CD8-positive, alpha-beta T cell (primary cell): ENCODE measurements at regions of chr15 and their contacts with region 1.

Region 1: DNA sequence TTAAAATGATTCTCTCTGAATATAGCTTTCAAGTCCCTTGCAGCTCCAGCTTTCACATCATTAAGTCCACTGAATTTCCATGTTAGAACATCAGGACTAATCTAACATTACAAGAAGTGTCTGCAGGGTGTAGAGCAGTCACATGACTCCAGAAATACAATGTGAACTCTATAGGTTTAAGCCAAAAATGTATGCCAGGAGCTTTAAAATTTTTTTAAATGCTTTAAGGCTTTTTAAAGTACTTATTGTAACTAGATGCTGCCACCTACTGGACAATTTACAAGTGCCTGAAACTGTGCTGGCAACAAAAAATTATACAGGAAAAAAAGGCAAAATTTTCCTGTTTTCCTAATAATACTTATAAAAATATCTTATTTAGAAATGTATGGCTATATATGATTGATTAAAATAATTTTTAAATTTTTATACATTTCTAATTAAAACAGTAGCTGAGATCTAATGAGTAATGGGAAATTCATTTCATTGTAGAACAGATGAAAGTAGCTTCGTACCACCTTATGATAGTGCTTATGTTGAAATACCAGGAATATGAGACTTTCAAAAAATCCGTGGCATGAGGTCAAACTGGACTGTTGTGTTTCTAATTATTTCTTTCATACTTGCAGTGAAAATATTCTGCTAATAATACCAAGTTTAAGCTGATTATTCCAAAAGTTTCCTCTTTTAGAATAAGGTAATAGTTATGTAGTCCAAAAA is 25.7 kb downstream of the FSIP1 start:
- DNase-seq: peak in 3 of 9 experiments; percentile 33 to 76 (median 67)
- ATAC-seq: peak; percentile 38
- H3K4me3 ChIP-seq: no peak overlapping the region
- H3K4me3 Mint-ChIP-seq: no peak overlapping the region
- H3K27ac ChIP-seq: no peak overlapping the region
- H3K27ac Mint-ChIP-seq: no peak overlapping the region
- H3K4me1 ChIP-seq: no peaks in the 10 kb centered on the region
- H3K4me1 Mint-ChIP-seq: no peaks in the 10 kb centered on the region
- H3K27me3 ChIP-seq: no peaks in the 10 kb centered on the region
- H3K27me3 Mint-ChIP-seq: no peaks in the 10 kb centered on the region
- CTCF ChIP-seq: peak; percentile 98

Region 2: GRCh38 chr15:37880009-37880834 is 1876.7 kb before region 1 on chr15:
- CTCF ChIA-PET with region 1: no interaction called
- POLR2A ChIA-PET with region 1: no interaction called
- intact Hi-C with region 1: no loop called
- DNase-seq: peak in 1 of 9 experiments; percentile 3
- ATAC-seq: no peak
- H3K4me3 ChIP-seq: no peak overlapping the region
- H3K4me3 Mint-ChIP-seq: no peak overlapping the region
- H3K27ac ChIP-seq: no peak overlapping the region
- H3K27ac Mint-ChIP-seq: no peak overlapping the region
- H3K4me1 ChIP-seq: no peaks in the 10 kb centered on the region
- H3K4me1 Mint-ChIP-seq: no peaks in the 10 kb centered on the region
- H3K27me3 ChIP-seq: no peaks in the 10 kb centered on the region
- H3K27me3 Mint-ChIP-seq: peaks cover 18% of the 10 kb centered on the region
- CTCF ChIP-seq: no peak

Region 3: GRCh38 chr15:38440353-38441129 is 1316.4 kb before region 1 on chr15:
- CTCF ChIA-PET with region 1: interaction called, 9 read pairs
- POLR2A ChIA-PET with region 1: no interaction called
- intact Hi-C with region 1: loop called in 1 of 2 experiments (anchors 5 kb)
- DNase-seq: peak in 8 of 9 experiments; percentile 24 to 84 (median 51)
- ATAC-seq: peak; percentile 99
- H3K4me3 ChIP-seq: no peak overlapping the region
- H3K4me3 Mint-ChIP-seq: no peak overlapping the region
- H3K27ac ChIP-seq: no peak overlapping the region
- H3K27ac Mint-ChIP-seq: no peak overlapping the region
- H3K4me1 ChIP-seq: peaks cover 4% of the 10 kb centered on the region
- H3K4me1 Mint-ChIP-seq: peaks cover 3% of the 10 kb centered on the region
- H3K27me3 ChIP-seq: no peaks in the 10 kb centered on the region
- H3K27me3 Mint-ChIP-seq: peaks cover 28% of the 10 kb centered on the region
- CTCF ChIP-seq: peak; percentile 98

Region 4: DNA sequence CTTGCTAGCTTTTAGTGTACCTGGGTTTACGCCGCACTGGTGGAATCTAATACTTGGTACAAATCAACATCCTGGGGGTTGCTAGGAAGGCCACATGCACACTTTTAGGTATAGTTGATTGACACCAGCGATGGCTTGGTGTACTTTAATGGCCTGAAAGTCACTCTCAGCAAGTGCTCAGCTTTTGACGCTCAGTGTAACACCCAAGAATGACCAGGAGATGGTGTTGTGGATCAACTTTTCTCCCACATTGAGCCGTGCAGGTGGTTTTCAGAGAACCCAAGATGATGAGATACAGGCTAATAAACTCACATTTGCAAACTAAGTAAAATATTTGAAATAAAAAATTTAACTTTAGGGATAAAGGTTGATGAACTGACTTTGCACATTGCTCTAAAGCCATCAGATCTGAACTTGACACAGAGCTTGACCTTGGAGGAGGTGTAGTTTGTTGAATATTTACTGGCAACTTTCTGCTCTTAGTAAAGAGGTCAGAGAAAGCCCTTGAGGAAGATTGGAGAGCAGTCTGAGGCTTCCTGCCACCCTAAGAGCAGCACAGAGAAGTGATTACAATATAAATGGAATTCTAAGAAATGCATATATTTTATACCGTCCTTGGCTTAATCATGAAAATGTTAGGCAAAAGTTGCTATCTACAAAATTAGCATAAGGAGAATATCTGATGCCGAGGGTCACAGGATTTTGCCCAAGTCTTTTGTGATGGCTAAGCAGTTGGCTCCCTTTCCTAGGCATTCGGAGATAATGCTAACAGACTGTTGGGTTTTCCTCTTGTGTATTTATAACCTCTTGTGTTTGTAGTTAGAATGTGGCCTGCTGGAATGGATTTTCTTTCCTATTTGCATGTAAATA is 1048.9 kb before region 1 on chr15:
- CTCF ChIA-PET with region 1: interaction called, 5 read pairs
- POLR2A ChIA-PET with region 1: no interaction called
- intact Hi-C with region 1: loop called (anchors 2 kb)
- DNase-seq: peak in 5 of 9 experiments; percentile 30 to 71 (median 40)
- ATAC-seq: peak; percentile 89
- H3K4me3 ChIP-seq: no peak overlapping the region
- H3K4me3 Mint-ChIP-seq: no peak overlapping the region
- H3K27ac ChIP-seq: no peak overlapping the region
- H3K27ac Mint-ChIP-seq: no peak overlapping the region
- H3K4me1 ChIP-seq: no peaks in the 10 kb centered on the region
- H3K4me1 Mint-ChIP-seq: no peaks in the 10 kb centered on the region
- H3K27me3 ChIP-seq: no peaks in the 10 kb centered on the region
- H3K27me3 Mint-ChIP-seq: no peaks in the 10 kb centered on the region
- CTCF ChIP-seq: peak; percentile 73

Region 5: DNA sequence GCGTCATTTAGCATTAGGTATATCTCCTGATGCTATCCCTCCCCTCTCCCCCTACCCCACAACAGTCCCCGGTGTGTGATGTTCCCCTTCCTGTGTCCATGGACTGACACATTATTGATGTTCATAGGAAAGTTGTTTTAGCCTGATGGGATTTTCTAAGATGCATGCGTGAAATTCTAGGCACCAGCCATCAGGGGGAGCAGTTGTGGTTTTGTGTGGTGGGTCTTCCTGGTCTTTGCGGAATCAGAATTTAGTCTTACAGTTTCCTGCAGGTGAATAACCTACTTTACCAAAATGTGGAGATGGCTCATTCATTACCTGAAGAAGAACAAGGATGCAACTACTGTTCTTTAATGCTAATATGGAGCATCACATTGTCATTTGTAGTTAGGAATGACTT is 631.1 kb before region 1 on chr15:
- CTCF ChIA-PET with region 1: interaction called, 6 read pairs
- POLR2A ChIA-PET with region 1: no interaction called
- intact Hi-C with region 1: loop called in 1 of 2 experiments (anchors 2 kb)
- DNase-seq: peak in 7 of 9 experiments; percentile 10 to 62 (median 22)
- ATAC-seq: no peak
- H3K4me3 ChIP-seq: no peak overlapping the region
- H3K4me3 Mint-ChIP-seq: no peak overlapping the region
- H3K27ac ChIP-seq: no peak overlapping the region
- H3K27ac Mint-ChIP-seq: no peak overlapping the region
- H3K4me1 ChIP-seq: no peaks in the 10 kb centered on the region
- H3K4me1 Mint-ChIP-seq: peaks cover 3% of the 10 kb centered on the region
- H3K27me3 ChIP-seq: no peaks in the 10 kb centered on the region
- H3K27me3 Mint-ChIP-seq: peaks cover 20% of the 10 kb centered on the region
- CTCF ChIP-seq: peak; percentile 59

Region 6: GRCh38 chr15:39586387-39587171 is 170.4 kb before region 1 on chr15:
- CTCF ChIA-PET with region 1: interaction called, 49 read pairs
- POLR2A ChIA-PET with region 1: no interaction called
- intact Hi-C with region 1: loop called (anchors 1 to 2 kb)
- DNase-seq: no peak
- ATAC-seq: no peak
- H3K4me3 ChIP-seq: no peak overlapping the region
- H3K4me3 Mint-ChIP-seq: no peak overlapping the region
- H3K27ac ChIP-seq: no peak overlapping the region
- H3K27ac Mint-ChIP-seq: no peak overlapping the region
- H3K4me1 ChIP-seq: no peaks in the 10 kb centered on the region
- H3K4me1 Mint-ChIP-seq: peaks cover 8% of the 10 kb centered on the region
- H3K27me3 ChIP-seq: peaks cover 0 to 2% of the 10 kb centered on the region in 2 experiments
- H3K27me3 Mint-ChIP-seq: peaks cover 6% of the 10 kb centered on the region
- CTCF ChIP-seq: no peak

Region 7: DNA sequence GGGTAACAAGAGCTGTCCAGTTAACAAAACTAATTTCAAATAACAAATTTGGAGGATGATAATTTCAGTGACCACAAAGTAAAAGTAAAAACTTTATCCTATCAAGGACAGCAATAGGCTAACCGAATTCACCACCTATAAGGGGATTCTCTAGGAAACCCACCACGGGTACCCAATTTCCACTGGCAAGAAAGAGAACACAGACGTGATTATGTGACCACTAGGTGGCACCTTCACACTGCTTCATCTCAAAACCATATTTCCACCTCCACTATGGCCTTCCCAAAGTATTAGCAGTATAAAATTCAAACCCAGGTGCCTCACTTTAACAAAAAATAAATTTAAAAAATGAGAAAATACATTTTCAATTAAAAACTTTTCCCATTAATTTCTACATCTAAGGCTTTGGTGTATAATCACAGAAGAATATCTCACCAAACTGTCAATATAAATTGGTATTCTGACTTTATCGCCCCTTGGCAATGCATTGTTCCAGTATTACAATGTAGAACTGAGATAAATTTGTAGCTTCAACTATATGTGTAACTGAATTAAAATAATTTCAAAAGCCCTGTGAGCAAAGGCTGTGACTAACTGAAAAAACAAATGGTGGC is 70.9 kb before region 1 on chr15:
- CTCF ChIA-PET with region 1: interaction called, 59 read pairs
- POLR2A ChIA-PET with region 1: no interaction called
- intact Hi-C with region 1: loop called (anchors 1 kb)
- DNase-seq: peak in 6 of 9 experiments; percentile 4 to 71 (median 29)
- ATAC-seq: peak; percentile 49
- H3K4me3 ChIP-seq: no peak overlapping the region
- H3K4me3 Mint-ChIP-seq: no peak overlapping the region
- H3K27ac ChIP-seq: no peak overlapping the region
- H3K27ac Mint-ChIP-seq: no peak overlapping the region
- H3K4me1 ChIP-seq: no peaks in the 10 kb centered on the region
- H3K4me1 Mint-ChIP-seq: no peaks in the 10 kb centered on the region
- H3K27me3 ChIP-seq: no peaks in the 10 kb centered on the region
- H3K27me3 Mint-ChIP-seq: no peaks in the 10 kb centered on the region
- CTCF ChIP-seq: peak; percentile 93

Region 8: DNA sequence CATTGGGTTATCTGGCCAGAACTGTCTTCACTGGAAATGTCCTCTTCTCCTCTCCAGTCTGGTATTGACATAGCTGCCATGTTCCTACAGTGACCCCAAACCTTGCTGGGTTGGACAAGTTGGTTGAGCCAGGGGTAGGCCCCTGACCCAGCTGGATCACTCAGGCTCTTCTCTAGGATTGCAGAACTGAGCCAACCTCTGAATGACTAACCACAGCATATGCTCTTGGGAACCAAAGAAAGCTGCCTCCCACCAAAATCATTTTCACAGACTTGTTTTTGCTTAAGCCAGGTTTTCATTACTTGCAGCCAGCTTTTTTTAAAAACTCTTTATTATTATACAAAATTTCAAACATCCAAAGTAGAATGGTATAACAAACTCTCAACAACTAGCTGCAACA is 15.7 kb before region 1 on chr15:
- CTCF ChIA-PET with region 1: interaction called, 15 read pairs
- POLR2A ChIA-PET with region 1: no interaction called
- intact Hi-C with region 1: no loop called
- DNase-seq: no peak
- ATAC-seq: no peak
- H3K4me3 ChIP-seq: no peak overlapping the region
- H3K4me3 Mint-ChIP-seq: no peak overlapping the region
- H3K27ac ChIP-seq: no peak overlapping the region
- H3K27ac Mint-ChIP-seq: no peak overlapping the region
- H3K4me1 ChIP-seq: no peaks in the 10 kb centered on the region
- H3K4me1 Mint-ChIP-seq: no peaks in the 10 kb centered on the region
- H3K27me3 ChIP-seq: no peaks in the 10 kb centered on the region
- H3K27me3 Mint-ChIP-seq: peaks cover 12% of the 10 kb centered on the region
- CTCF ChIP-seq: no peak